ENCODE measurements at regions of chr4 and their contacts with region 1.

Region 1: DNA sequence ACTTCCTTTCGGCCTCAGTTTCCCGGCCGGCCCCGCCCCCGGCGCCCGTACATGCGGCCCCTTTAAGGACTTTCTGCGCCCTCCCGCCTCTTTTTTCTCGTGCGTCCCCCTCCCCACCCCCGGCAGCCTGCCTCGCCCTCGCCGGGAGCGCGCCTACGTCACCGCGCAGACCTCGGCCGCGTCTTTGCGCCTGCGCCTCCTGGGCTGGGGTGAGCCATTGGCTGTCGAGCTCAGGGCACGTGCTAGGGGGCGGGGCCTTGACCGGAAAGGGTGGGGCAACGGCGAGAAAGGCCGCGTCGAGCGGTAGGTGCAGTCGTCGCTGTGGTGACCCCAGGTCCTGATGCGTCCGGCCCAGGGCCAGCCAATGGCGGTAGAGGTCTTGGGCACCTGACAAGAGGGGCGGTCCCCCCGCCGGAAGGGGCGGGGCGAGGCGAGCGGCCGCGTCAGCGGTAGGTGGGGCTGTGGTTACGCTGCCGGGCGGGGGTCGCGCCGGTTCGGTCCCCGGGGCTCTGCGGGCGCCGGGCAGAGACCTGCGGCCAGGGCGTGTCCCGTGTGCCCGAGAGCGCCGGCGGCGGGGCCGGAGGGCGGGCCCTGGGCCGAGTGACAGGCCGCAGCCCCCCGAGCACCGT is at the start of gene UVSSA:
- DNase-seq: peak; percentile 100
- H3K4me3 ChIP-seq: peak within 1 kb of the TSS; percentile 90 to 97
- H3K27ac ChIP-seq: peak within 1 kb of the TSS; percentile 96 to 99
- H3K4me1 ChIP-seq: peaks cover 9 to 19% of the 10 kb centered on the region in 2 donors
- H3K27me3 ChIP-seq: no peaks in the 10 kb centered on the region
- CTCF ChIP-seq: no peak
- total RNA-seq, gene UVSSA: 56.9 TPM

Region 2: GRCh38 chr4:781493-782216 is 565.2 kb before region 1 on chr4:
- intact Hi-C with region 1: loop called (anchors 2 kb)
- DNase-seq: peak; percentile 99
- H3K4me3 ChIP-seq: peak overlapping the region; percentile 87 to 97
- H3K27ac ChIP-seq: peak overlapping the region; percentile 92 to 94
- H3K4me1 ChIP-seq: peaks cover 8 to 31% of the 10 kb centered on the region in 2 donors
- H3K27me3 ChIP-seq: peaks cover 14% of the 10 kb centered on the region
- CTCF ChIP-seq: no peak

Region 3: GRCh38 chr4:1249148-1249730 is 97.7 kb before region 1 on chr4:
- intact Hi-C with region 1: loop called (anchors 1 kb)
- DNase-seq: peak in 1 of 2 donors; percentile 90
- H3K4me3 ChIP-seq: peak overlapping the region; percentile 78 to 95
- H3K27ac ChIP-seq: peak overlapping the region; percentile 90 to 95
- H3K4me1 ChIP-seq: peaks cover 25 to 40% of the 10 kb centered on the region in 2 donors
- H3K27me3 ChIP-seq: no peaks in the 10 kb centered on the region
- CTCF ChIP-seq: no peak

Region 4: GRCh38 chr4:1323635-1324442 is 23.1 kb before region 1 on chr4:
- intact Hi-C with region 1: loop called (anchors 1 kb)
- DNase-seq: peak in 1 of 2 donors; percentile 77
- H3K4me3 ChIP-seq: no peak overlapping the region
- H3K27ac ChIP-seq: peak overlapping the region; percentile 56 to 73
- H3K4me1 ChIP-seq: peaks cover 0 to 8% of the 10 kb centered on the region in 2 donors
- H3K27me3 ChIP-seq: no peaks in the 10 kb centered on the region
- CTCF ChIP-seq: no peak

Region 5: DNA sequence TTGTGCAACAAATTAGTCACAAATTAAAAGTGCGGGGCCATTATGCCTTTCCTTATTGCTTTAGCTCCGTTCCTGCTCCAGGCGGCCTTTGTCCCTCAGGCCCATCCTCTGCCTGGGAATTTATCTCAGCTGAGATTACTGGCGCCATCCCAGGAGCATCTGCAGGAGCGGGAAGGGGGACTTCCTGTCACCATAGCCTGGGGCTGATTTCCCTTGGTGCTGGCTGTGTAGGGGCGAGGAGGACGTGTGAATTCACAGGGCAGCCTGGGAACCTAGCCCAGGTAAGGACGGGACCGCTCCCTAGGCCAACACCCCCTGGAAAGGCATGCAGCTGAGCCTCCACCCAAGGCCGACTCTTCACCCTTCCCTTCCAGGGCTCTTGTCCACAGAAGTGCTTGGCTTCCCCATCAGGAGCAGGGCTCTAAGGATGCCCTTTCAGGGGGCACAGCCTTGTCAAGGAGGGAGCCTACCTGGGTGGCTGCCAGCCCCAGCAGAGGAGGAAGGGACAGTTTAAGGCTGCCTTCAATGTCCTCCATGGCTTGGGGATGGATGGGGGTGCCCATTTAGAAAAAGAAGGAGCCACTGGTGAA is 132.0 kb after region 1 on chr4:
- intact Hi-C with region 1: no loop called
- DNase-seq: peak in 1 of 2 donors; percentile 18
- H3K4me3 ChIP-seq: no peak overlapping the region
- H3K27ac ChIP-seq: no peak overlapping the region
- H3K4me1 ChIP-seq: no peaks in the 10 kb centered on the region
- H3K27me3 ChIP-seq: no peaks in the 10 kb centered on the region
- CTCF ChIP-seq: no peak

Region 6: DNA sequence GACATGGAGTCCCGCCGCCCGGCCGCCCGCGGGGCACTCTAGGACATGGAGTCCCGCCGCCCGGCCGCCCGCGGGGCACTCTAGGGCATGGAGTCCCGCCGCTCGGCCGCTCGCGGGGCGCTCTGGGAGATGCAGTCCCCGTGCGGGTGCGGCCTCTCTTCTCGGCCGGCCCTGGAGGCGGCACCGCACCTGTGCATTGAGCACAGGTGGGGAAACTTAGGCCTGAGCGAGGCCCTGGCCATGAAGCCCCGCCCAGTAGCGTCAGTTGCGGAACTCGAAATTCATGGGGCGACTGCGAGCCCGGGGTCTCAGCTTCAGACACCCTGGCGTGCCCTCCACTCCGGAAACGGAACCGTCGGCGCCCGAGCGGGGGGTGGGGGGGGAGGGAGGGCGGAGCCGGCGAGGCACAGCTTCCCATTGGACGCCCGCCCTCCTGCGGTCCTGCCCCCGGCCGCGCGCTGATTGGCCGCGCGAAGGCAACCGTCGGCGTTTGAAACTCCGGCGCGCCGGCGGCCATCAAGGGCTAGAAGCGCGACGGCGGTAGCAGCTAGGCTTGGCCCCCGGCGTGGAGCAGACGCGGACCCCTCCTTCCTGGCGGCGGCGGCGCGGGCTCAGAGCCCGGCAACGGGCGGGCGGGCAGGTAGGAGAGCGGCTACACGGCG is 374.2 kb after region 1 on chr4 and contains the starts of genes TACC3 and TMEM129:
- intact Hi-C with region 1: loop called (anchors 5 kb)
- DNase-seq: peak; percentile 84 to 95
- H3K4me3 ChIP-seq: peak within 1 kb of the TSS; percentile 81 to 87
- H3K27ac ChIP-seq: peak within 1 kb of the TSS; percentile 87 to 90
- H3K4me1 ChIP-seq: peaks cover 12 to 18% of the 10 kb centered on the region in 2 donors
- H3K27me3 ChIP-seq: no peaks in the 10 kb centered on the region
- CTCF ChIP-seq: no peak
- total RNA-seq, gene TACC3: 2.7 TPM
- total RNA-seq, gene TMEM129: 192 TPM

Region 7: DNA sequence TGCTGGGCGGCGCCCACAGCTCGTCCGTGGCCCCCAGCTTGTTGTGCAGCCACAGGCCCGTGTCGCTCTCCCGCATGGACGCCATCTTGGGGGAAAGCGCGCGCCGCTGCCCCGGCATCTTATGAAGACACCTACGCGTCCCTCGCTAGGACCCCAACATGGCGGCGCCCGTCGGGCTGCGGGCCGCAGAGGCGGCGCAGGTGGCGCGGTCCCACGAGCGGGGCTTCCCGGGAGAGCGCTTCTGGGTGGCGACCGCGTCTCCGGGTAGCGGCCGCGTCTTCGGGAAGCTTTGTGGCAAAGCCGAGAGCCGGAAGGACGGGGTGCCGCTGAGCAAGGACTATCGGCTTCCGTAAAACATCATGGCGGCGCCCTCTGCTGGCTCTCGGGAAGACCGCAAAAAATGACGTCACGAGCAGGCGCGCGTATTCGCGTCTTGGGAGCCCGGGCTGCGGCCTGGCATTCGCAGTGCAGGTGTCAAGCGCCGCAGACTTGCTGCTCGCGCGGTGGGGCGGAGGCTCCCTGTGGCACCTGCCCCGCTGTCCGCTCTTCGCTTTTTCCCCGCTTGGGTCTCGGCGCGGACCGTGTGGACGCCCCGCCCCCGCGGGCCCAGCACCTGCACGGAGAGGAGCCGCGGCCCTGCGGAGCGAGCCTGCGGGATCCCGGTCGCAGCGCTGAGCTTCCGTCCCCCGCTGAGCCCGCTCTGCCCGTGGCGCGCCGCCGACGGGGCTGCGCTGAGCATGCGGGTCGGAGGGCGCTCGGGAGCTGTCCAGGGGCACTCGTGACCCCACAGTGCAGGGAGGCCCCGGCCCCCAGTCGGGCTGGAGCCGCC is 662.2 kb after region 1 on chr4 and contains the start of gene NELFA:
- intact Hi-C with region 1: loop called (anchors 5 kb)
- DNase-seq: peak; percentile 63 to 96
- H3K4me3 ChIP-seq: peak within 1 kb of the TSS; percentile 84 to 98
- H3K27ac ChIP-seq: peak within 1 kb of the TSS; percentile 96 to 98
- H3K4me1 ChIP-seq: peaks cover 0 to 2% of the 10 kb centered on the region in 2 donors
- H3K27me3 ChIP-seq: no peaks in the 10 kb centered on the region
- CTCF ChIP-seq: peak in 2 of 3 experiments; percentile 44 to 54
- total RNA-seq, gene NELFA: 11.9 TPM

Measured in ascending aorta (tissue), 2 donors.